HCT116 (cell line): ENCODE measurements at regions of chrX and their contacts with region 1.

Region 1: DNA sequence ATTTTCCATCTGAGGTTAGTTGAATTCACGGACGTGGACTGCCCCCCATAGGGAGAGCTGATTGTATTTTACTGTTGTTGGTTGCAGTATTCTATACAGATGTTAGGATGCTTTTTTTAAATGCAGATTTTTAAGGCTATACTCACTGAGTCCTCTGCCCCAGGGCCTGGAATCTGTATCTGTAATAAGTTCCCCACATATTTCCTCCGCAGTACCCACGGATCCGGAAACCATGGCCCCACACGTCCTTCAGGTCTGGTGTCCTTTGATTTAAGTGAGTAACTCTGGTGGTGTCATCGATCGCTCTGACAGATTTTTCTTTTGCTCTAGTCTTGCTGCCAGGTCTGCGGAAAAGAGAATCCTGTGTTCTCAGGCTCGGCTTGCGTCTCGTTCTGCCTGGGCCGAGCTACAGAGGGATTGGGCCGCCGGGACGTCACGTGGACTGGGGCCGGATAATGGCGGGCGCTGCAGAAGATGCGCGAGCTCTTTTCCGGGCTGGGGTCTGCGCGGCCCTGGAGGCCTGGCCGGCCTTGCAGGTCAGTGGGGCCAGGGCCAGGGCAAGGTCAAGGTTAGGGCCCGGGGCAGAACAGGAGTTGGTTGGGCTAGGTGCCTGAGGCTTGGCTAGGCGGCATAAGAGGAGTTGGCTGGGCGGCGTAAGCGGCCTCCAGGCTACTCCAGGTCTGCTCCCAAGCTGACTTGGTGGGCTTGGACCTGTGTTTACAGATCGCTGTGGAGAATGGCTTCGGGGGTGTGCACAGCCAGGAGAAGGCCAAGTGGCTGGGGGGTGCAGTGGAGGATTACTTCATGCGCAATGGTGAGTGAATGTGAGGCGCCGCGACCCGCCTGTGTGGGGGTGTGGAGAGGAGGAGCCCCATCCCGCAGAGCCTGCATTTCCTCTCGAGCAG is at the start of gene TSR2:
- DNase-seq: peak; percentile 72
- ATAC-seq: peak; percentile 93
- H3K4me3 ChIP-seq: peak within 1 kb of the TSS; percentile 83 to 87
- H3K27ac ChIP-seq: peak within 1 kb of the TSS; percentile 35; the same call in 1 of the 2 replicates
- H3K4me1 ChIP-seq: peaks cover 5 to 9% of the 10 kb centered on the region in 2 experiments; a peak in 3 of 4 replicates
- H3K27me3 ChIP-seq: no peaks in the 10 kb centered on the region
- CTCF ChIP-seq: peak in 2 of 3 experiments; percentile 9 to 27; a peak in 2 of 6 replicates
- POLR2A ChIP-seq: no peak
- RAD21 ChIP-seq: peak; percentile 47; the same call in 1 of the 2 replicates
- total RNA-seq, gene TSR2: 27.9 TPM

Region 2: GRCh38 chrX:54182864-54183608 is 257.2 kb before region 1 on chrX and contains the start of gene FAM120C:
- CTCF ChIA-PET with region 1: no interaction called
- POLR2A ChIA-PET with region 1: no interaction called
- RAD21 ChIA-PET with region 1: no interaction called
- intact Hi-C with region 1: loop called (anchors 10 kb)
- DNase-seq: peak; percentile 56
- ATAC-seq: peak; percentile 72
- H3K4me3 ChIP-seq: peak within 1 kb of the TSS; percentile 60 to 70
- H3K27ac ChIP-seq: peak within 1 kb of the TSS; percentile 94
- H3K4me1 ChIP-seq: peaks cover 4 to 23% of the 10 kb centered on the region in 2 experiments; a peak in 3 of 4 replicates
- H3K27me3 ChIP-seq: no peaks in the 10 kb centered on the region
- CTCF ChIP-seq: no peak
- POLR2A ChIP-seq: no peak
- RAD21 ChIP-seq: no peak
- total RNA-seq, gene FAM120C: 6.1 TPM

Region 3: DNA sequence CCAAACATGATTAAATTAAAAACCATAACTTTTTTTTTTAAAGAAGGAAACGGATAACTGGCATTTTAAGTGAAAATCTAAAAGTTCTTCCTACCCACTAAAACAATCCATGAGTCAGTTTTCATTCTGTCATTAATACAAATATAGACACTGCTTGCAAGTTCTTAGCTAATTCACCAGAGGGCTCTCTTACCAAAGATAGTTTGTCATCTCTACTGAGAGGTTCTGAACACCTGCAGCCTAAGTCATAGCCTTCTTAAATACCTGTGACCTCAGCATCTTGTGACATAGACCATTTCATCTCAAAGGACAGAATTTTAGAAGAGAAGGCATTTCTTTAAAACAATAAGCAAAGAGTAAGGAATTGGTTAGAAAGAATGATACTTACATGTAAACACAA is 191.9 kb before region 1 on chrX:
- CTCF ChIA-PET with region 1: interaction called, 3 read pairs
- POLR2A ChIA-PET with region 1: no interaction called
- RAD21 ChIA-PET with region 1: no interaction called
- intact Hi-C with region 1: loop called (anchors 1 kb)
- DNase-seq: peak; percentile 6
- ATAC-seq: peak; percentile 71; the same call in 1 of the 2 replicates
- H3K4me3 ChIP-seq: no peak overlapping the region
- H3K27ac ChIP-seq: no peak overlapping the region
- H3K4me1 ChIP-seq: no peaks in the 10 kb centered on the region
- H3K27me3 ChIP-seq: no peaks in the 10 kb centered on the region
- CTCF ChIP-seq: peak in 2 of 3 experiments; percentile 29 to 46; a peak in 2 of 6 replicates
- POLR2A ChIP-seq: no peak
- RAD21 ChIP-seq: peak; percentile 60

Region 4: DNA sequence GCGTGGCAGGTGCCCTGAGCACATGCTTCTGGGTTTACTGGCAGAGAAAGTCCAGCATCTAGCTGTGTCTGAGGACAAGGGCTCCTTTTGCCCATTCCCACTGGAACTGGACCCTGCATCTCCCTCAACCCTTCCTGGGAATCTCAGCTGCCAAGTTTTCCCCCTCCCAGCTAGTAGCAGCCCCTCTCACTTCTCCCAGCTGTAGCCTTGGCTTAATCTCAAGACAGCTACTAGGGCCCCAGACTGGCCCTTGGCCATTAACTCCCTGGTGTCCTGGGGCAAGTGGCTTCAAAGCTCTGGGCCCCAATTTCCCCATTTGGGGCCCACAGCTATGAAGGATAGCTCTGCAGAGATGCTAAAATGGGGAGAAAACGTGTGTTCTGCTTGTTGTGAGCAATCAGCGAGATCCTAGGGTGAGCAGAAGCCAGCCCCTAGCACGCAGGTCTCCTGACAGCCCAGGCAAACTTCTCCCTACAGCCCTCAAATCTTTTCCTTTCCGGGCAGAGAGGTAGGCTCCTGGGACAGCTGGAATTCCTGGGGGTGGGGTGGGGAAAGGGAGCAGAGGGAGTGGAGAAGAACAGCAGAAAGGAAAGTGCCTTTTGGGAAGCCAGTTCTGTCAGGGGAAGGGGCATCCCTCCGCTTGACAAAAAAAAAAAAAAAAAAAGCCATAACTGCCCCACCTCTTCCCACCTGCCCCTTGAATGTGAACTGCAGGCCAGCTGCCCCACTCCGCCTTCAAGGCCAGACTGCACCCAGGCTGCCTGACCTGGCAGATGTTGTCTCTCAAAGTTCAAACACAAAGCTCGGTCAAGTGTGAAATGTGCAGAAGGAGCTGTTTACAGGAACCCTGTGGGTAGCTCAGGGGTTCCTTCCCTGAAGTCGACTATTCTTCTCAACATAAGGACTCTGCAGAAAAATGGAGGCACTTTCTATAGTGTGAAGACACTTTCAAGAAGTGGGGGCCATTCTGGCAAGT is 39.2 kb after region 1 on chrX:
- CTCF ChIA-PET with region 1: no interaction called
- POLR2A ChIA-PET with region 1: no interaction called
- RAD21 ChIA-PET with region 1: no interaction called
- intact Hi-C with region 1: no loop called
- DNase-seq: no peak
- ATAC-seq: no peak
- H3K4me3 ChIP-seq: no peak overlapping the region
- H3K27ac ChIP-seq: no peak overlapping the region
- H3K4me1 ChIP-seq: peaks cover 9 to 24% of the 10 kb centered on the region in 2 experiments; a peak in 3 of 4 replicates
- H3K27me3 ChIP-seq: no peaks in the 10 kb centered on the region
- CTCF ChIP-seq: no peak
- POLR2A ChIP-seq: no peak
- RAD21 ChIP-seq: no peak

Region 5: GRCh38 chrX:54839282-54839681 is 399.1 kb after region 1 on chrX:
- CTCF ChIA-PET with region 1: no interaction called
- POLR2A ChIA-PET with region 1: no interaction called
- RAD21 ChIA-PET with region 1: no interaction called
- intact Hi-C with region 1: no loop called
- DNase-seq: no peak
- ATAC-seq: no peak
- H3K4me3 ChIP-seq: no peak overlapping the region
- H3K27ac ChIP-seq: no peak overlapping the region
- H3K4me1 ChIP-seq: no peaks in the 10 kb centered on the region
- H3K27me3 ChIP-seq: no peaks in the 10 kb centered on the region
- CTCF ChIP-seq: no peak
- POLR2A ChIP-seq: no peak
- RAD21 ChIP-seq: no peak